ENCODE measurements at regions of chr1 and their contacts with region 1.

Region 1: DNA sequence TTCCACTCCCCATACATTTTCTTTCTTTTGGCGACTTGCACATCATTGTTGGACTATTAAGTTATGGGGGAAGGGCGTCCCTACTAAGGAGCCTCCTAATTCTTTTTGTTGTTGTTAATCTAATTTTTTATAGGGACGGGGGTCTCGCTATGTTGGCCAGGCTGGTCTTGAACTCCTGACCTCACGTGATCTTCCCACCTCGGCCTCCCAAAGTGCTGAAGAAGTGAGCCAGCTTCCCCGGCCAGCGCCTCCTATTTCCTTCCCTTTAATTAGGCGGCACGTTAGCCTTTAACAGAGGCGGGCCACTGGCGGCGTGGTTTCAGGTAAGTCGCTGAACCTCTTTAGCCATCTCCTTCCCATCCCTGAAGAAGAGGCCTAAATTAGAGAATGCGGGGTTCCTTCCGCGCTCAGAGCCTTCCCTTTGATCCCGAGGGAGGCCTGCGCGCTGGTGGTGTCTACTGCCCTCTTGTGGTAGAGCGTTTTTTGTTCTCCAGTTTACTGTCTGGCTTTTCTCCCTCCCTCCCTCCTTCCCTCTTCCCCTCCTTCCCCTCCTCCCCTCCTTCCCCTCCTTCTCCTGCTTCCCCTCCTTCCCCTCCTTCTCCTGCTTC is 38.1 kb downstream of the TNFRSF9 start:
- ATAC-seq: peak; percentile 89 to 99 (median 96)
- H3K4me3 ChIP-seq: no peak overlapping the region
- H3K27ac ChIP-seq: no peak overlapping the region
- H3K4me1 ChIP-seq: peaks cover 0 to 2% of the 10 kb centered on the region in 2 donors

Region 2: DNA sequence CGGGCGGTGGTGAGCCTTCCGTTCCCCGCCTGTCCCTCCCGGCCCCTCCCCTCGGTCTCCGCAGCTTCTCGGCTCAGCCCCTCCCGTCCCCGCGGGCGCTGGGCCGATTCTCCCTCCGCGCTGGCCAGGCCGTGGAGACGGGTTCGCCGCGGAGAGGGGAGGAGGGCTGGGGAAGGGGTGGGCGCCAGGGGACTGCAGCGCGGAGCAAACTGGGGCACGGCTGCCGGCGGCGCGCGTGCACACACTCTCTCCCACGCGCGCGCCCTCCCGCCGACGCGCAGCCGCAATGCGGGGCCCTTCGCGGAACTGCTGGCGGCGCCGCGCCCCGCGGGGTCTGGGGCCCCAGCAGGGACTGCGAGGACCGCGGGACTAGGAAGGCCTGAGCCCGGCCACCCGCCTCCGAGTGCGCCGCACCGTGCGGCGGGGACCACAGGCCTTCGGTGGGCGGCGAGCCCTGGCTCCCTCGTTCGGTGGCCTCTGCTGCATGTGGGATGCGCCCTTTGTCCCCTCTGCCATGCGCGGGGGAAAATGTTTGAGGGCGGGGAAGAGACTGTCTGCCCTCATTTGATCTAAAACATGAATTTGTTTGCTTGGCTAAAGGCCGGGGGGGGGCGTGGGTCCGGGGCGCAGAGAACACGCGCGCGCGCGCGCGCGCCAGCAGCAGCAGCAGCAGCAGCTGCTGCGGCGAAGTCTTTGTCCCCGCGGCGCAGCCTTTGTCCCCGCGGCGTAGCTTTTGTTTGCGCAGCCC is 222.2 kb before region 1 on chr1:
- in situ Hi-C with region 1: loop called in 1 of 9 experiments (anchors 25 kb)
- ATAC-seq: peak; percentile 86 to 95 (median 94)
- H3K4me3 ChIP-seq: peak overlapping the region; percentile 39 to 56 (median 41)
- H3K27ac ChIP-seq: peak overlapping the region; percentile 94 to 99
- H3K4me1 ChIP-seq: peaks cover 14 to 18% of the 10 kb centered on the region in 2 donors

Region 3: GRCh38 chr1:7808253-7808844 is 94.2 kb before region 1 on chr1:
- in situ Hi-C with region 1: loop called in 2 of 9 experiments (anchors 5 to 25 kb)
- ATAC-seq: peak in 3 of 8 experiments; percentile 55 to 70 (median 63)
- H3K4me3 ChIP-seq: no peak overlapping the region
- H3K27ac ChIP-seq: no peak overlapping the region
- H3K4me1 ChIP-seq: no peaks in the 10 kb centered on the region

Region 4: GRCh38 chr1:8197493-8198282 is 295.1 kb after region 1 on chr1:
- in situ Hi-C with region 1: no loop called
- ATAC-seq: peak in 2 of 8 experiments; percentile 65 to 84
- H3K4me3 ChIP-seq: no peak overlapping the region
- H3K27ac ChIP-seq: no peak overlapping the region
- H3K4me1 ChIP-seq: peaks cover 18 to 28% of the 10 kb centered on the region in 2 donors

Region 5: GRCh38 chr1:8232036-8232757 is 329.6 kb after region 1 on chr1:
- in situ Hi-C with region 1: no loop called
- ATAC-seq: peak in 1 of 8 experiments; percentile 19
- H3K4me3 ChIP-seq: no peak overlapping the region
- H3K27ac ChIP-seq: no peak overlapping the region
- H3K4me1 ChIP-seq: no peaks in the 10 kb centered on the region